Posterior vena cava (tissue), 2 donors: ENCODE measurements at regions of chr5 and their contacts with region 1.

Region 1: GRCh38 chr5:9987101-9987500 is 262.6 kb downstream of the ATPSCKMT start:
- DNase-seq: no peak

Region 2: DNA sequence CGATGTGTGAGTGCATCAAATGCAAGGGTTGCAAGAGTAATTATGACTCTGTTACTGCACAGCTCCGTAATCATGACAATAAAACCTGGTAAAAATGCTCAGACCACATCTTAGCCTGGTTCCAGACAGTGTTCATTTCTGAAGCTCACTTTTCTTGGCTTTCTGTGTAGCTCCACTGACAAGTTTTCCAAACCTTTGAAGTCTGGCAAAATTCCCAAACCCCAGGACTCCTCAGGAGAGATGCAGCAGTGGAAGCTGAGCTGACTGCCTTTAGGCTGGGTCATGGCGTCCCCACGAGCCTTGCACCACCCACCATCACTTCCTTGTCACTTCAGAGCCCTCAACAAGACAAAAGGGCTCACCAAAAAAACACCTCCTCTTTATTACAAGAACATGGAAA is 225.4 kb before region 1 on chr5:
- intact Hi-C with region 1: loop called in 1 of 2 experiments (anchors 5 kb)
- DNase-seq: no peak

Region 3: GRCh38 chr5:10503997-10504793 is 517.1 kb after region 1 on chr5:
- intact Hi-C with region 1: no loop called
- DNase-seq: no peak

Region 4: DNA sequence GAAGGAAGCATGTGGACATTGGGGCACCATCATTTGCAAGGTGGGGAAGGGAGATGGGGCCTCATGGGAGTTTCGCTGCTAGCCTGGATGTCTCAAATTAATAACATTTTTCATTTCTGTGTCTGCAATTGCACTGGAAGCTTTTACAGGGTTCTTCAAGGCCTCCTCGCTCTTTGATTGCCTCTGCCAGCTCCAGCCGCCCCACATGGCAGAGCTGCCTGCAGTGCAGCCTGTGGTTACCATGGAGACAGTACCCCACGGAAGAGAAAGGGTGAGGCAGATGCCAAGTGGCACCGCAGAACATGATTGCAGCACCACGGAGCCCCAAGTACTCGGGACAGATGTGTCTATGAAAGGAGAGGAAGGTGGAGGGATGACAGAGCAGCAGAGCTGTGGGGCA is 1891.7 kb after region 1 on chr5:
- intact Hi-C with region 1: no loop called
- DNase-seq: peak; percentile 29